ENCODE measurements at regions of chr9 and their contacts with region 1.

Region 1: DNA sequence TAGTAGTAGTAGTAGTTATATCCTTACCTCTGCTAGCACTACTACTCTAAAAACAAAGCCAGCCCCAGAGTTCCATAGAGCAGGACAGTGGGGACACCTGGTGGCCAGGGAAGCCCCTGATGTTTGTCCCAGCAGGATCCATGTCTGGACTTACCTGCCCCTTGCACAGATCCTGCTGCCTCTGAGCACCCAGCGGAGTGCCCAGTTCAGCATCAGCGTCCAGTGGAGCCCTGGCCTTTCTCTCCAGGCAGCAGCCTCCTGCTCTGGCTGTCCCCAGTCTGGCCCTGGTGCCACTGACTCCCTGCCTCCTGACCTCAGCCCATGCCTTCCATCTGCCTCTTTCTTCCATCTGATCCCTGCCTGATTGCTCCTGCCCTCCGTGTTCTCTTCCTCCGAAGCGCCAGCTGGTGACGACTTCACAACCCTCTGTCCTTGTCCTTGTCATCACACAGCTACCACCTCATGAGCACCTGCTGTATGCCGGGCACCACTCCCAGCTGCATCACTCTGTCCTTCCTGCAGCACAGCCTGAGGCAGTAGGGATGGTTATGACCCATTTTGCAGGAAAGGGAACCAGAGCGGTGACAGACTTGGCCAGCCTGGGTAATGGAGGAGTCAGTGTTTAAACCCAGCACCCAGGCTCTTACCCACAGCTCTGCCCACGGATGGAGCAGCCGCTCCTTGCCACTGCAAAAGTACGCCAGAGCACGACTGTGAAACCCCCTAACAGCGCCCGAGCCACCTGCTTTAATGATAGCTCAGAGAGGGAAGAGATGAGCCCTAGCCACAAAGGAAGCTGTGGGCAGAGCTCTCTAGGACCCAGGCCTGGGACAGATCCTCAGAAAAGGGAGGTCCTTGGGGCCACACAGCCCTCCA is 11.5 kb downstream of the SARDH start:
- DNase-seq: peak; percentile 47
- H3K4me3 ChIP-seq: no peak overlapping the region
- H3K27ac ChIP-seq: no peak overlapping the region
- H3K4me1 ChIP-seq: no peaks in the 10 kb centered on the region
- H3K27me3 ChIP-seq: no peaks in the 10 kb centered on the region
- CTCF ChIP-seq: peak; percentile 22 to 51 (median 47)
- EP300 ChIP-seq: no peak
- POLR2A ChIP-seq: no peak

Region 2: DNA sequence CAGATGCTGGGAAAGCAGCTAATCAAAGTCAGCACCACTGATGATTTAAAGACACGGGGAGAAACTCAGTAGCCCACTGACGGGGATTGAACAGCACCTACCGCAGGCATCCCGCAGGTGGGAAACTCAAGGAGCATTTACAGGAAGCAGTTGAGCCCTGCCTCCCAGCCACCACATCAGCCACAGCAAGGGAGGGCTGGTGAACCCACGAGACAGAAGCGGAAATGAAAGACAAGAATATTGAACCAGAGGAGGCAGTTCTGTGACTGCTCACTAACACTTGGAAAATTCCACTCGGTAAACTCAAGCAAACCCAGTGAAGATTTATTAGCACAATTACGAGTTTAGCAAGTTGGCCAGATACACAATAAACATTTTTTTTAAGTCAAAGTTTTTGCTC is 106.8 kb before region 1 on chr9:
- in situ Hi-C with region 1: no loop called
- intact Hi-C with region 1: no loop called
- DNase-seq: peak; percentile 23
- H3K4me3 ChIP-seq: no peak overlapping the region
- H3K27ac ChIP-seq: no peak overlapping the region
- H3K4me1 ChIP-seq: no peaks in the 10 kb centered on the region
- H3K27me3 ChIP-seq: peaks cover 48% of the 10 kb centered on the region
- CTCF ChIP-seq: no peak
- EP300 ChIP-seq: no peak
- POLR2A ChIP-seq: no peak

Region 3: DNA sequence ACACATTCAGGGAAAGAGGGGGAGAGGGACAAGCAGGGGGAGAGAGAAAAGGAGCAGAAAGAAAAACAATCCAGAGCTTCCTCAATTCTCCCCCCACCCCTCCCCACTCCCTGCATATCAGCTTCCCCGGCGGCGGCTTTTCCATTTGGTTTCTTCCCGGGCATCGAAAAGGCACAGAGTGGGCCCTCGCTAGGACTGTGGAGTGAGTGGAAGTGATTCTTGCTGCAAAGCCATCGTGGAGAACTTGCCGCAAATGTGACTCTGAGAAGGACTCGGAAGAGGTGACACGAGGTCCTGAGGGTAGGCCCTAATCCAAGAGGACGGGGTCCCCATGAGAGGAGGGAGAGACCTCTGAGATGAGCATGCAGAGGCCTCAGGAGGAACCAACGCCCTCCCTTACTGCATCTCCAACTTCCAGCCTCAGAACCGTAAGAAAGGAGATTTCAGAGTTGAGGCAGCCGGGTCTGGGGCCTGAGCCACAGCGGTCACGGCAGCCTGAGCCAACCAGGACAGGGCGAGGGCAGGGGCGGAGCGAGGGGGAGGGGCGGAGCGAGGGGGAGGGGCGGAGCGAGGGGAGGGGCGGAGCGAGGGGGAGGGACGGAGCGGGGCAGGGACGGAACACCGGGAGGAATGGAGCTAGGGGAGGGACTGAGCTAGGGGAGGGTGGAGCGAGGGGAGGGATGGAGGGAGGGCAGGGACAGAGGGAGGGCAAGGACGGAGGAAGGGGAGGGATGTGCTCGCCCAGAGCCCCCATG is 32.7 kb after region 1 on chr9:
- in situ Hi-C with region 1: no loop called
- intact Hi-C with region 1: loop called (anchors 1 kb)
- DNase-seq: no peak
- H3K4me3 ChIP-seq: no peak overlapping the region
- H3K27ac ChIP-seq: no peak overlapping the region
- H3K4me1 ChIP-seq: no peaks in the 10 kb centered on the region
- H3K27me3 ChIP-seq: peaks cover 5% of the 10 kb centered on the region
- CTCF ChIP-seq: no peak
- EP300 ChIP-seq: no peak
- POLR2A ChIP-seq: no peak